HEK293 (cell line): ENCODE measurements at regions of chr1 and their contacts with region 1.

Region 1: GRCh38 chr1:70221241-70222121 is at the start of gene SRSF11:
- H3K4me3 ChIP-seq: peak within 1 kb of the TSS; percentile 93
- H3K27ac ChIP-seq: peak within 1 kb of the TSS; percentile 99
- H3K4me1 ChIP-seq: peaks cover 5% of the 10 kb centered on the region
- CTCF ChIP-seq: peak; percentile 65

Region 2: DNA sequence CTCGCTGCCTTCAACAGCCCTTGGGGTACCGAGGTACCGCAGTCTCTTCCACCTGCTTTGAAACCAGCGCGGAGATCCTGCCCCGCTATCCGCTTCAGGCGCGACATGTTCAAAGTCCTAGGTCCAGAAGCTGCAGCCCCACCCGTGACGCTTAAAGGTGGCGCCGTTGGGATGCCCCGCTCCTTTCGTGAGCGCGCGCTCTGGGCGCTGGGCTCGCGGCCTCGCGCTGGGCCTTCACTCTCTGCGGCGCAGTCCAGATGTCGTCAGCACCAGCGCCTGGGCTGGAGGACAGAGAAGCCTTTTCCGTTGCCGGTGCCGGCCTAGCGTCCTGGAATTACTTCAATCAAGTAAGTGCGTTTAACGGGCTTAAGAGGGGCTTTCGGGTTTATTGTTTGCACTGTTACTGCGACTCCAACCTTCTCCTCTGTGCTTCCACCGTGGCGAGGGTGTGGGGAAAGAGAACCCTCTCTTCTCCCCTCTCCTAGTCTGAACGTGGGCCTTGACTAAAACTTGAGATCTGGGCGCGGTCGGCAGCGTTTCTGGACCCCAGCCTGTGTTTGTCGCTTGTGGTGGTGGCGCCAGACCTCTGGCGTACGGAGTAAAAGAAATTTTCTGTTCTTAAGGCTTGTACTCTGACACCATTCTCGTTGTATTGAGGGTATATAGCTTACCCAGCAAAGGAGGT is 15.9 kb before region 1 on chr1 and contains the start of gene LRRC40:
- CTCF ChIA-PET with region 1: no interaction called
- POLR2A ChIA-PET with region 1: interaction called, 29 read pairs
- H3K4me3 ChIP-seq: peak within 1 kb of the TSS; percentile 91
- H3K27ac ChIP-seq: peak within 1 kb of the TSS; percentile 89
- H3K4me1 ChIP-seq: no peaks in the 10 kb centered on the region
- CTCF ChIP-seq: peak; percentile 40